ENCODE measurements at regions of chr2 and their contacts with region 1.

Region 1: GRCh38 chr2:68709421-68709911 is 25.1 kb upstream of the ARHGAP25 start:
- DNase-seq: no peak
- H3K4me3 ChIP-seq: no peak overlapping the region
- H3K27me3 ChIP-seq: peaks cover 3% of the 10 kb centered on the region
- CTCF ChIP-seq: peak; percentile 75

Region 2: DNA sequence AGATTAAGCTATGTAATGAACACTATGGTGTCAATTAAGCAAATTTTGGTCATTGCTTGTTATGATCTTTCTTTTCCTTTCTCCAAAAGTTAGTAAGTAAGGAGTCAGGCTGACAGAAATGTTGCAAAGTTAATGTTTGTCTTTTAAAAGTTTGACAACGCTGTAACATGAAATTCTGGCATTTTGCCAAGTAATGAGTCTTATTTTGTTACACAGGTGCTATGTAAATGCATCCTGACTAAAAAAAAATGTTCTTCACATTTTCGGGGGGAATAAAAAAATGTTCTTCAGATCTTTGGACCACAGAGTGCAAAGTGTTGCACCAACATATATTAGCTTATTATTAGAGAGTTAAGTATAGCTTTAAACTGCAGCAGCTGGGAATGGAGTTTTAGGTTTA is 120.9 kb before region 1 on chr2:
- CTCF ChIA-PET with region 1: no interaction called
- POLR2A ChIA-PET with region 1: no interaction called
- DNase-seq: no peak
- H3K4me3 ChIP-seq: no peak overlapping the region
- H3K27me3 ChIP-seq: no peaks in the 10 kb centered on the region
- CTCF ChIP-seq: no peak

Region 3: DNA sequence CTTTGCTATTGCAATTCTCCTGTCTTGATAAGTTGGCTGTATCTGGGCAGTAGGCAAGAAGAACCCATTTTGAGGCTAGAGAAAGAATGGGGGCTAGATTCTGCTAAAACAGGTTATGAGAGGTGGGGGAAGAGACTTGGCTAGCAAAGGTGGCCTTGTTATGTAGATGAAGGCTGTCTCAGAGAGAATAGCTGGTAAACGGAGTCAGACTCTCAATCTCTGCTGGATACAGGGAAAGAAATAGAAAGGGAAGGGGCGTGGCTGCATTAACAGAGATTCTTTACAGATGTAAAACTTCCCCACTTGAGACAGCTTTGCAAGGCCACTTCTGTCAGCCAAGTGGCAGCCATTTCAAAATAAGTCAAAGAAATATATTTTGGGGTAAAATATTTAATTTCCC is 12.9 kb before region 1 on chr2:
- CTCF ChIA-PET with region 1: interaction called, 13 read pairs
- POLR2A ChIA-PET with region 1: no interaction called
- DNase-seq: no peak
- H3K4me3 ChIP-seq: no peak overlapping the region
- H3K27me3 ChIP-seq: peaks cover 4% of the 10 kb centered on the region
- CTCF ChIP-seq: no peak

Region 4: GRCh38 chr2:68721482-68722101 is 12.1 kb after region 1 on chr2:
- CTCF ChIA-PET with region 1: interaction called, 19 read pairs
- POLR2A ChIA-PET with region 1: no interaction called
- DNase-seq: no peak
- H3K4me3 ChIP-seq: no peak overlapping the region
- H3K27me3 ChIP-seq: no peaks in the 10 kb centered on the region; the same call in 1 of the 2 replicates
- CTCF ChIP-seq: no peak

Region 5: DNA sequence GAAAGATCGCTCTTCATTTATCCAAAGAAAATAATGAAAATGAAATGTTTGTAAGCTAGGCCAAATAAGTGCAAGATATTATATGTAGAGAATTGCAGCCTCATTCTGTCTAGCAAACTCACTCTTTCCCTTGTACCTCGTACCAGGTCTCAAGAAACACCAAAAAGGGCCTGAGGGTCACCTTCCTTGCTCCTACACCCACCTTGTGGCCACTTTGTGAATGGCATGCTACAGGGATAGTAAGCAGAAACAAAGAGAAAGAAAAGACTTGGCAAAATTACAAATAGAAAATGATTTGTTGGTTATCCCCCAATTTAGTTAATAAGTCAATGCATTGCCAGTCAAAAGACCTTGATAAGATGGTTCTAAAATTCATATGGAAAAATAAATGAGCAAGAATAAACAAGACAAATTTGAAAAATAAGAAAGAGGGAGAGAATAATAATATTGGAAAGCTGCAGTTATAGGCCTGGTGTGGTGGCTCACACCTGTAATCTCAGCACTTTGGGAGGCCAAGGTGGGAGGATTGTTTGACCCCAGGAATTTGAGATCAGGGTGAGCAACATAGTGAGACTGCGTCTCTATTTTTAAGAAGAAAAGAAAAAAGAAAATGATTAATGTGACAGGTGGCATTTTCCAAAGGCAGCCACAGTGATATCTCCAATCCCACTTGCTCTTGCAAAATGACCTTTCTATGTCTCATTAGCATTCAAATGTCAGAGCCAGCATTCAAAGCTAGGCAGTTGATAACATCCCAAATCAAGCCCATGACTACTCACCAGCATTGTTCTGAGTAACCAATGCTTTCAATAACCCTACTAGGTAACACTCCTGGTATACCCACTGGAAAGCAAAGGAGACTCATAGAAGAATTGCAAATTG is 200.6 kb after region 1 on chr2:
- CTCF ChIA-PET with region 1: interaction called, 25 read pairs
- POLR2A ChIA-PET with region 1: no interaction called
- DNase-seq: no peak
- H3K4me3 ChIP-seq: no peak overlapping the region
- H3K27me3 ChIP-seq: no peaks in the 10 kb centered on the region; the same call in 1 of the 2 replicates
- CTCF ChIP-seq: peak; percentile 93

Region 6: DNA sequence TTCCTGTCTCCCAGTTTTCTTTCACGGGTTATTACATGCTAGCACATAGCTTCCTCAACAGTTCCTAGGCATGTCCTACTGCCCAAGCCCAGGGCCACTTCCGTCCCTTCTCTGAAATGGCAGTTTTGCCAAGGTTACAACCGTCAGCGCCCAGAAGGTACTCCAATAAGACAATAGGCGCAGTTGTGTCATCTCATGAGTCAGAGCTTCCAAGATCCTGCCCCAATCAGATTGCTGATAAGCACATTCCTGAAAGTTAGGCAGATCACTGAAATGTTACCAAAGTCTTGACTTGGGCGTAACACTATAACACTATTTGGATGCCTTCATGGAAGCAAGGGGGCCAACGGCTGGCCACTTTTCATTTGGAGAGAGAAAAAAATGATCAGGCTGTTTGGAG is 209.0 kb after region 1 on chr2:
- CTCF ChIA-PET with region 1: interaction called, 10 read pairs
- POLR2A ChIA-PET with region 1: no interaction called
- DNase-seq: no peak
- H3K4me3 ChIP-seq: no peak overlapping the region
- H3K27me3 ChIP-seq: no peaks in the 10 kb centered on the region
- CTCF ChIP-seq: no peak

Region 7: GRCh38 chr2:68925295-68925896 is 215.9 kb after region 1 on chr2:
- CTCF ChIA-PET with region 1: interaction called, 95 read pairs
- POLR2A ChIA-PET with region 1: interaction called, 3 read pairs
- DNase-seq: no peak
- H3K4me3 ChIP-seq: no peak overlapping the region
- H3K27me3 ChIP-seq: peaks cover 2% of the 10 kb centered on the region
- CTCF ChIP-seq: peak; percentile 88